Caco-2 (cell line): ENCODE measurements at regions of chr14 and their contacts with region 1.

Region 1: DNA sequence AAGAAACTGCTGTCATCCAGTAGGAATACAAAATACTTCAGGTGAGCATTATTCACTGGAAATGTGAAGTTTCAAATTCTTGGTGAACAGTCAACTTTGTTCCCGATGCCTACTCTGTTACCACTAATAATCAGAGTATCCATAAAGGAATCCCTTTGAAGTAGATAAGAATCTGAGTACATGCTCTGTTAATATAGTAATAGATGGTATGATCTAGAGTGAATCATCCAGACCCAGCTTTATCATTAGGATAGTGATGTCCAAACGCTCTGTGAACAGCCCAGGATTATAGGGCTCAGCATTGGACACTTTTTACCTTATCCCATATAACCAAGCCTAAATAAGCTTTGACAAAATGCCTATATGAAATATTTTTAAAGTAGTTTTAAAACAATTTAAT is 33.3 kb downstream of the PPP2R3C start:
- DNase-seq: no peak
- H3K4me3 ChIP-seq: no peak overlapping the region
- H3K4me3 Mint-ChIP-seq: no peak overlapping the region
- H3K27ac Mint-ChIP-seq: peak overlapping the region; percentile 71
- H3K4me1 ChIP-seq: peaks cover 16% of the 10 kb centered on the region
- H3K4me1 Mint-ChIP-seq: peaks cover 10% of the 10 kb centered on the region
- H3K27me3 ChIP-seq: no peaks in the 10 kb centered on the region
- H3K27me3 Mint-ChIP-seq: no peaks in the 10 kb centered on the region
- CTCF ChIP-seq: no peak

Region 2: DNA sequence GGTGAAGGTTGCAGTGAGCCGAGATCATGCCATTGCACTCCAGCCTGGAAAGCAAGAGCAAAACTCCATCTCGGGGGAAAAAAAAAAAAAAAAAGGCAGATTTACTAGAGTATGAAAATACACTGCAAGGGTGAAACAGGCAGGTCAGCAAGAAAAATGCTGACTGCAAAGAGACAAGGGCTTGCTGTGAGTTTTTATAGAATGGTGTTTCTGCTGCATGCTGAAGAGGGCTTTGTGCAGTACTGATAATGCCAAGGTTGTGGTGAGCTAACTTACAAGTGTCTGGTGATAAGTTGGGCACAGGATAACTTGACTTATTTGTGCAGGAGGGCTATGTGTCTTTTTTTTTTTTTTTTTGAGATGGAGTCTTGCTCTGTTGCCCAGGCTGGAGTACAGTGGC is 131.6 kb before region 1 on chr14:
- CTCF ChIA-PET with region 1: no interaction called
- POLR2A ChIA-PET with region 1: interaction called, 14 read pairs
- intact Hi-C with region 1: no loop called
- DNase-seq: no peak
- H3K4me3 ChIP-seq: no peak overlapping the region
- H3K4me3 Mint-ChIP-seq: no peak overlapping the region
- H3K27ac Mint-ChIP-seq: no peak overlapping the region
- H3K4me1 ChIP-seq: peaks cover 19% of the 10 kb centered on the region
- H3K4me1 Mint-ChIP-seq: peaks cover 16% of the 10 kb centered on the region
- H3K27me3 ChIP-seq: no peaks in the 10 kb centered on the region
- H3K27me3 Mint-ChIP-seq: no peaks in the 10 kb centered on the region
- CTCF ChIP-seq: no peak

Region 3: GRCh38 chr14:35073486-35073885 is 15.0 kb before region 1 on chr14:
- CTCF ChIA-PET with region 1: no interaction called
- POLR2A ChIA-PET with region 1: no interaction called
- intact Hi-C with region 1: no loop called
- DNase-seq: no peak
- H3K4me3 ChIP-seq: no peak overlapping the region
- H3K4me3 Mint-ChIP-seq: no peak overlapping the region
- H3K27ac Mint-ChIP-seq: no peak overlapping the region
- H3K4me1 ChIP-seq: peaks cover 7% of the 10 kb centered on the region
- H3K4me1 Mint-ChIP-seq: no peaks in the 10 kb centered on the region
- H3K27me3 ChIP-seq: no peaks in the 10 kb centered on the region
- H3K27me3 Mint-ChIP-seq: no peaks in the 10 kb centered on the region
- CTCF ChIP-seq: no peak

Region 4: GRCh38 chr14:35107866-35108265 is 19.4 kb after region 1 on chr14:
- CTCF ChIA-PET with region 1: no interaction called
- POLR2A ChIA-PET with region 1: no interaction called
- intact Hi-C with region 1: no loop called
- DNase-seq: no peak
- H3K4me3 ChIP-seq: no peak overlapping the region
- H3K4me3 Mint-ChIP-seq: no peak overlapping the region
- H3K27ac Mint-ChIP-seq: no peak overlapping the region
- H3K4me1 ChIP-seq: peaks cover 10% of the 10 kb centered on the region
- H3K4me1 Mint-ChIP-seq: peaks cover 3% of the 10 kb centered on the region
- H3K27me3 ChIP-seq: no peaks in the 10 kb centered on the region
- H3K27me3 Mint-ChIP-seq: no peaks in the 10 kb centered on the region
- CTCF ChIP-seq: no peak